ENCODE measurements at regions of chr11 and their contacts with region 1.

Region 1: GRCh38 chr11:119666463-119667131 is 62.4 kb downstream of the NECTIN1 start:
- DNase-seq: peak; percentile 74
- H3K4me3 Mint-ChIP-seq: no peak overlapping the region
- H3K27ac Mint-ChIP-seq: no peak overlapping the region
- H3K4me1 Mint-ChIP-seq: no peaks in the 10 kb centered on the region
- H3K27me3 Mint-ChIP-seq: no peaks in the 10 kb centered on the region

Region 2: GRCh38 chr11:119373921-119374631 is 292.5 kb before region 1 on chr11:
- CTCF ChIA-PET with region 1: no interaction called
- POLR2A ChIA-PET with region 1: no interaction called
- intact Hi-C with region 1: no loop called
- DNase-seq: peak; percentile 73
- H3K4me3 Mint-ChIP-seq: no peak overlapping the region
- H3K27ac Mint-ChIP-seq: no peak overlapping the region
- H3K4me1 Mint-ChIP-seq: peaks cover 8% of the 10 kb centered on the region
- H3K27me3 Mint-ChIP-seq: peaks cover 1% of the 10 kb centered on the region

Region 3: GRCh38 chr11:119741369-119742262 is 75.0 kb after region 1 on chr11:
- CTCF ChIA-PET with region 1: no interaction called
- POLR2A ChIA-PET with region 1: no interaction called
- intact Hi-C with region 1: loop called (anchors 2 kb)
- DNase-seq: peak; percentile 72
- H3K4me3 Mint-ChIP-seq: peak overlapping the region; percentile 4
- H3K27ac Mint-ChIP-seq: no peak overlapping the region
- H3K4me1 Mint-ChIP-seq: peaks cover 9% of the 10 kb centered on the region
- H3K27me3 Mint-ChIP-seq: peaks cover 49% of the 10 kb centered on the region

Region 4: DNA sequence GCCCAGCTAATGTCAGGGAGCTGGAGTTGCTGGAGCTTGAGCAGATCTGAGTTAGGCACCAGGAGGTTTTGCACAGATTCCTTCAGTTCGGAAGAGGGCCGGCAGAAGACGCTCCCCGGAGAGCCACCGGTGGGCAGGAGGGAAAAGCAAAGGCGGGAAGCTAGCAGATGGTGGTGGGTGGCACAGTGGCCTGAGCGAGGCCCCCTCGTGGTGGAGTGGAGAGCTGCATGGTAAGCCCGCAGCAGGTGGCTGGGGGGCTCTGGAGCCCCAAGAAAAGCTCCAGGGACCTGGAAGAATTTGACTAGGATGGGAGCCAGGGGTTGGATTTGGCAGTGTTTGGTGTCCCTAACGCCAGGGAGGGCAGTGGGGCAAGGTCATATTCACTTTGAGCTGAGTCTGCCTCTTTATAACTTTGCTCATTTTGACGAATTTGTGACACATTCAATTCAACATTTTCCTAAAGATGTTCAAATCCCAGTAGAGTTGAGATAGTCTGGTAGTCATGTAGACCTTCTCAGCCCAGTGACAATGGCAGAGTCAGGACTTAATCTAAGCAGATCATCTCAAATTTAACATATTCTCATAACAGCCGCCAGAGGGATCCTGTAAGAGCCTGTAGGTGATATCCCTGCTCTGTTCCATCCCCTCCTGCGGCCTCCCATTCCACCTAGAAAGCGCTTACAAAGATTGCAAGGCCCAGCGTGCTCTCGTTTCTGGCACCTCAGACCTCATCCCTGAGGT is 413.3 kb after region 1 on chr11:
- CTCF ChIA-PET with region 1: interaction called, 4 read pairs
- POLR2A ChIA-PET with region 1: no interaction called
- intact Hi-C with region 1: loop called (anchors 1 kb)
- DNase-seq: peak; percentile 36
- H3K4me3 Mint-ChIP-seq: no peak overlapping the region
- H3K27ac Mint-ChIP-seq: no peak overlapping the region
- H3K4me1 Mint-ChIP-seq: peaks cover 3% of the 10 kb centered on the region
- H3K27me3 Mint-ChIP-seq: peaks cover 25% of the 10 kb centered on the region

Region 5: DNA sequence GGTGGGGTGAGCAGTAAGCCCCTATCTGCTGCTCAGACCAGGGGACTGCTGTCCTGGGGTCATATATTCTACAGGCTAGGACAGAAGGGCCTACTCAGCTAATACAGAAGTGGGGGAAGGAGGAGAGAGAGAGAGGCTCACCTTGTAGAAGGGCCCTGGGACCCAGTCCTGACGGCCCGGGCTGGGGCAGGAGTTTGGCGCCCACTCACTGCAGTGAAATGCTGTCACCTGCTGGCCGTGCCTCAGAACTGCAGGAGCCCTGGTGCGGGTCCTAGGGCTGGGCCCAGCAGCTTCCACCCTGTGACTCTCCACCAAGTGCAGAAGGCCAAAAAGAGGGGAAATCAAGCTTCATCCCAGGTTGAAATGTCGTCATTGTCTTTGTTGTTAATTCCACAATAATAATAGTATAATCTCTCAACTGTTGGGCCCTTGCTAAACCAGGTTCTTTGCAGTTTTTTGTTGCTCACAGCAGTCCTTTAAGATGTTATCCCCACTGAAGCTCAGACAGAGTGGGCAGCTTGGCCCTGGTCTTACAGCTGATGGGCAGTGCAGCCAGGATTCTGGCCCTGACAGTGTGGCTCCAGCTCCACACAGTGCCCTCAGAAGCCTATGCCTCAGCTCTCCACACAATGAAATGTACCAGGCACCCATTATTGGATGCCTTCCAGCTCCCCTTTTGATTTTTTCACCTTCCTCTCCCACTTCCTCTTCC is 441.7 kb after region 1 on chr11:
- CTCF ChIA-PET with region 1: interaction called, 5 read pairs
- POLR2A ChIA-PET with region 1: no interaction called
- intact Hi-C with region 1: loop called (anchors 1 kb)
- DNase-seq: peak; percentile 72
- H3K4me3 Mint-ChIP-seq: no peak overlapping the region
- H3K27ac Mint-ChIP-seq: no peak overlapping the region
- H3K4me1 Mint-ChIP-seq: no peaks in the 10 kb centered on the region
- H3K27me3 Mint-ChIP-seq: peaks cover 8% of the 10 kb centered on the region

Measured in activated CD4-positive, alpha-beta memory T cell treated with anti-CD3 and anti-CD28 coated beads for 36 hours (primary cell).